IMR-90 (cell line): ENCODE measurements at regions of chr3 and their contacts with region 1.

Region 1: GRCh38 chr3:45938864-45939263 is 4.4 kb upstream of the CXCR6 start:
- DNase-seq: peak; percentile 91
- ATAC-seq: peak; percentile 96
- H3K4me3 ChIP-seq: no peak overlapping the region
- H3K27ac ChIP-seq: no peak overlapping the region
- H3K4me1 ChIP-seq: peaks cover 4% of the 10 kb centered on the region
- H3K27me3 ChIP-seq: no peaks in the 10 kb centered on the region
- CTCF ChIP-seq: peak; percentile 98
- POLR2A ChIP-seq: no peak
- RAD21 ChIP-seq: peak; percentile 97

Region 2: GRCh38 chr3:45953536-45953935 is 14.7 kb after region 1 on chr3:
- CTCF ChIA-PET with region 1: no interaction called
- POLR2A ChIA-PET with region 1: no interaction called
- dilution Hi-C with region 1: no loop called
- in situ Hi-C with region 1: no loop called
- intact Hi-C with region 1: no loop called
- DNase-seq: no peak
- ATAC-seq: no peak
- H3K4me3 ChIP-seq: no peak overlapping the region
- H3K27ac ChIP-seq: no peak overlapping the region
- H3K4me1 ChIP-seq: peaks cover 19% of the 10 kb centered on the region
- H3K27me3 ChIP-seq: no peaks in the 10 kb centered on the region
- CTCF ChIP-seq: no peak
- POLR2A ChIP-seq: no peak
- RAD21 ChIP-seq: no peak

Region 3: DNA sequence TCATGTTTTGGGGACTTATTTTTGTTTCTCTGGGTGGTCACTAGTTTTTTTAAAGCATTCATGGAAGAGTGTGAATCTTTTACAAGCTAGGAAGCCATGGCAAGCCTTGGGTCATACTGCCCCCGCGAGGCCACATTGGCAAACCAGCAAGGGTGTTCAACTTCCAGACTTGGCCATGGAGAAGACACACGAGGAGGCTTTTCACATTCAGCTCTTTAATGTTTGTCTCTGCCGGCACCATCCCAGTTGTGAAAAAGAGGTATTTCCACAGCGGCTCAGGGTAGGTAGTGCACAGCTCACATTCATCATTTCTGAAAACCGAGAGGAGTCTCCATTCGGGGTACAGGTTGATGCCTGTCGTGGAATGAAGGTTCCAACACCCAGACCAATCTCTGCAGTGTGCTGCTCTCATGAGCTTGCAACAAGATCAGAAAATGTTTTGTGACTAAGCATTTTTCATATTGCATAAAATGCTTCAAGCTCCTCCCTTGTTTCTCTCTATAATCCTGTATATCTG is 439.6 kb after region 1 on chr3:
- CTCF ChIA-PET with region 1: no interaction called
- POLR2A ChIA-PET with region 1: no interaction called
- dilution Hi-C with region 1: no loop called
- in situ Hi-C with region 1: loop called (anchors 10 kb)
- intact Hi-C with region 1: loop called (anchors 2 kb)
- DNase-seq: peak; percentile 40
- ATAC-seq: peak; percentile 72
- H3K4me3 ChIP-seq: no peak overlapping the region
- H3K27ac ChIP-seq: no peak overlapping the region
- H3K4me1 ChIP-seq: no peaks in the 10 kb centered on the region
- H3K27me3 ChIP-seq: peaks cover 48% of the 10 kb centered on the region
- CTCF ChIP-seq: peak; percentile 66
- POLR2A ChIP-seq: no peak
- RAD21 ChIP-seq: peak; percentile 77